A673 (cell line): ENCODE measurements at regions of chr18 and their contacts with region 1.

Region 1: GRCh38 chr18:63741769-63742168 is 33.4 kb upstream of the SERPINB7 start:
- DNase-seq: peak; percentile 71
- H3K4me3 ChIP-seq: no peak overlapping the region
- H3K27ac ChIP-seq: no peak overlapping the region
- H3K4me1 ChIP-seq: no peaks in the 10 kb centered on the region
- H3K27me3 ChIP-seq: no peaks in the 10 kb centered on the region
- CTCF ChIP-seq: peak; percentile 77

Region 2: DNA sequence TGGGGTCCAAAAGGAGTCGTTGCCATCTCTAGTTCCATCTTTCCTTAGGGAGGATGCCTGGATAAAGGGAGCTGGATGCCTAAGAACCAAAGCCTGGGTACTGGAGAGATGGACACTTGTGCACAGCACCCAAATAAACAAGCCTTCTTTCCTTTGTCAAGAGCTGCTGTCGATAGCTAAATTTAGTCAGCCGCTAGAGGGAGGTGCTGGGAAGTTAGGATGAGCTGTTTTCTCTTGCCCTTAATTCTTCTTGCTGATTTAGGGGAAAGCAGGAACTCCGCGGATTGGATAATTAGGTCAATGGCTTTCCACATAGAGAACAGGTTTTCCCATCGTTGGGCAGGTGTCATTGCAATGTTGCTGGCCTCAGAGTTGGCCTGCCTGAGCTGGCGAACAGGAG is 230.5 kb before region 1 on chr18:
- CTCF ChIA-PET with region 1: interaction called, 20 read pairs
- POLR2A ChIA-PET with region 1: no interaction called
- intact Hi-C with region 1: no loop called
- DNase-seq: peak; percentile 72
- H3K4me3 ChIP-seq: no peak overlapping the region
- H3K27ac ChIP-seq: no peak overlapping the region
- H3K4me1 ChIP-seq: peaks cover 12% of the 10 kb centered on the region
- H3K27me3 ChIP-seq: no peaks in the 10 kb centered on the region
- CTCF ChIP-seq: peak; percentile 65

Region 3: GRCh38 chr18:63518178-63519012 is 223.4 kb before region 1 on chr18:
- CTCF ChIA-PET with region 1: interaction called, 32 read pairs
- POLR2A ChIA-PET with region 1: no interaction called
- intact Hi-C with region 1: loop called (anchors 2 kb)
- DNase-seq: peak; percentile 90
- H3K4me3 ChIP-seq: no peak overlapping the region
- H3K27ac ChIP-seq: no peak overlapping the region
- H3K4me1 ChIP-seq: no peaks in the 10 kb centered on the region
- H3K27me3 ChIP-seq: no peaks in the 10 kb centered on the region
- CTCF ChIP-seq: peak; percentile 77

Region 4: GRCh38 chr18:63578357-63578958 is 163.3 kb before region 1 on chr18:
- CTCF ChIA-PET with region 1: no interaction called
- POLR2A ChIA-PET with region 1: no interaction called
- intact Hi-C with region 1: loop called (anchors 2 kb)
- DNase-seq: peak; percentile 79
- H3K4me3 ChIP-seq: no peak overlapping the region
- H3K27ac ChIP-seq: no peak overlapping the region
- H3K4me1 ChIP-seq: peaks cover 25% of the 10 kb centered on the region
- H3K27me3 ChIP-seq: no peaks in the 10 kb centered on the region
- CTCF ChIP-seq: peak; percentile 89

Region 5: GRCh38 chr18:63590373-63590772 is 151.4 kb before region 1 on chr18:
- CTCF ChIA-PET with region 1: interaction called, 3 read pairs
- POLR2A ChIA-PET with region 1: no interaction called
- intact Hi-C with region 1: loop called (anchors 5 kb)
- DNase-seq: peak; percentile 58
- H3K4me3 ChIP-seq: no peak overlapping the region
- H3K27ac ChIP-seq: peak overlapping the region; percentile 75
- H3K4me1 ChIP-seq: peaks cover 37% of the 10 kb centered on the region
- H3K27me3 ChIP-seq: no peaks in the 10 kb centered on the region
- CTCF ChIP-seq: no peak

Region 6: GRCh38 chr18:63831080-63831788 is 89.5 kb after region 1 on chr18:
- CTCF ChIA-PET with region 1: interaction called, 17 read pairs
- POLR2A ChIA-PET with region 1: no interaction called
- intact Hi-C with region 1: no loop called
- DNase-seq: no peak
- H3K4me3 ChIP-seq: no peak overlapping the region
- H3K27ac ChIP-seq: no peak overlapping the region
- H3K4me1 ChIP-seq: no peaks in the 10 kb centered on the region
- H3K27me3 ChIP-seq: no peaks in the 10 kb centered on the region
- CTCF ChIP-seq: no peak